ENCODE measurements at regions of chr13 and their contacts with region 1.

Region 1: DNA sequence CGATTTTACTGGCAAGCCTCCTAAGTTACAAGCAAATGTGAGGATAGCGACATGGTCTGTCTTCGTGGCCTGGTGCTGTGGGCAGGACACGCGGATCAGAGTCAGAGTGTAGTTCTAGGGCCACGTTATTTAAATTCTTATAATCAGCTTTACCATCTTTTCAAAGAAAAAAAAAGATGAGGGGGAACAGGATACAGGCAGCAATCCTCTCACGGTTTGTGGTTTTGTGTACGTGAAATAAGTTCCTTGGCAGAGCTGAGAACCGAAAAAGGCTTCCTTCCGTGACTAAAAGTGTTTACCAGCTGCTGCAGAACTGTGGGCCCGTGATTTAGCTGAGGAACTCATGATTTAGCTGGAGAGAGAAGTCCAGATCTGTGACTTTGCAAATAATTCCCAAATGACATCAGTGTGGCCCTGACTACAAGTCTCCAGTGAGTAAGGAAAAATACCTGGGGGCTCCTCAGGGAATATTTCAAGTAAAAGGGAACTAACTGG is 27.2 kb downstream of the RCBTB2 start:
- DNase-seq: peak; percentile 83
- ATAC-seq: peak; percentile 83
- H3K4me3 Mint-ChIP-seq: peak overlapping the region; percentile 7
- H3K27ac Mint-ChIP-seq: peak overlapping the region; percentile 98
- H3K4me1 Mint-ChIP-seq: peaks cover 83% of the 10 kb centered on the region
- H3K27me3 Mint-ChIP-seq: no peaks in the 10 kb centered on the region

Region 2: GRCh38 chr13:48492470-48493065 is 13.1 kb before region 1 on chr13:
- CTCF ChIA-PET with region 1: interaction called, 19 read pairs
- DNase-seq: peak; percentile 92
- ATAC-seq: peak; percentile 85
- H3K4me3 Mint-ChIP-seq: no peak overlapping the region
- H3K27ac Mint-ChIP-seq: no peak overlapping the region
- H3K4me1 Mint-ChIP-seq: peaks cover 63% of the 10 kb centered on the region
- H3K27me3 Mint-ChIP-seq: no peaks in the 10 kb centered on the region

Region 3: DNA sequence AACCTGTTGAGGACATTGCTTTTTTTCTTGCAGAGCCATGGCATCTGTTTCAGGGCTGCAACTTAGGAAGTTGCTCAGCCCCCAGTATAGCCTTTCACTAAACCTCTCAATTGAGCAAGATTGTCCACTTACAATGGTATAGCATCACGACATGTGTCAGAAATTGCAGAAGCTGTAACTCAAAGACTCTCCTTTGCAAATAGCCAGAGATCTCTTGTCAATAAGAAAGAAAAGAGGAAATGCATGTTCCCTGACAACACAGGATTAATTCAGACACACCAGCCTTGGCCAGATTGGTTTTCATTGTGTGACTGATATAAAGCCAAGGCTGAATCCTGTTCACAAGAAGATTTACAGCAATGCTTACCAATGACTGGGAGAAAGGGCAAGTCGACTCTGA is 109.4 kb after region 1 on chr13:
- CTCF ChIA-PET with region 1: no interaction called
- DNase-seq: no peak
- ATAC-seq: no peak
- H3K4me3 Mint-ChIP-seq: no peak overlapping the region
- H3K27ac Mint-ChIP-seq: no peak overlapping the region
- H3K4me1 Mint-ChIP-seq: no peaks in the 10 kb centered on the region
- H3K27me3 Mint-ChIP-seq: no peaks in the 10 kb centered on the region